Common myeloid progenitor, CD34-positive (primary cell): ENCODE measurements at regions of chr10 and their contacts with region 1.

Region 1: GRCh38 chr10:11113156-11113555 is 95.5 kb downstream of the CELF2 start:
- DNase-seq: peak; percentile 63 to 77 (median 76)
- H3K4me3 ChIP-seq: peak overlapping the region in 2 of 7 experiments; percentile 28 to 35
- H3K27ac ChIP-seq: no peak overlapping the region
- H3K4me1 ChIP-seq: peaks cover 7 to 17% (median 10%) of the 10 kb centered on the region in 4 experiments
- H3K27me3 ChIP-seq: no peaks in the 10 kb centered on the region

Region 2: DNA sequence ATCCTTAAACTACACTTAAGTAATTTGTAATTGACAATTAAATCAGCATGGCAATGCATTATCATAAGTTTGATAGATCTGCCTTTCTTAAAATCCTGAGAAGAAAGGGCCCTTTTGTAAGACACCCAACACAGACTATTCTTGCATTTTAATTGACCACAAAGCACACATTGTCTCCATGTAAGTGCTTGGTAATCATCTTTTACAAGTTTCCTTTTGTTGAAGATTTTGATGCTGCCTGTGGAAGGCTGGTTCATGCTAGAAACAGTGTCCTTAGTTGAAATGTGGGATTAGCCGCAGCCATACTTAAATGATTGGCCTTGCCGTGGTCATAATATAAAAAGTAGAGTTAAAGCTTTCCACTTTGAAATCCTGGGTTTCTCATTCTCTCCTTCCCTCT is 127.8 kb before region 1 on chr10:
- CTCF ChIA-PET with region 1: no interaction called
- POLR2A ChIA-PET with region 1: no interaction called
- DNase-seq: no peak
- H3K4me3 ChIP-seq: no peak overlapping the region
- H3K27ac ChIP-seq: no peak overlapping the region
- H3K4me1 ChIP-seq: no peaks in the 10 kb centered on the region
- H3K27me3 ChIP-seq: no peaks in the 10 kb centered on the region

Region 3: GRCh38 chr10:11097686-11098085 is 15.5 kb before region 1 on chr10:
- CTCF ChIA-PET with region 1: interaction called, 20 read pairs
- POLR2A ChIA-PET with region 1: no interaction called
- DNase-seq: no peak
- H3K4me3 ChIP-seq: no peak overlapping the region
- H3K27ac ChIP-seq: no peak overlapping the region
- H3K4me1 ChIP-seq: no peaks in the 10 kb centered on the region
- H3K27me3 ChIP-seq: no peaks in the 10 kb centered on the region

Region 4: DNA sequence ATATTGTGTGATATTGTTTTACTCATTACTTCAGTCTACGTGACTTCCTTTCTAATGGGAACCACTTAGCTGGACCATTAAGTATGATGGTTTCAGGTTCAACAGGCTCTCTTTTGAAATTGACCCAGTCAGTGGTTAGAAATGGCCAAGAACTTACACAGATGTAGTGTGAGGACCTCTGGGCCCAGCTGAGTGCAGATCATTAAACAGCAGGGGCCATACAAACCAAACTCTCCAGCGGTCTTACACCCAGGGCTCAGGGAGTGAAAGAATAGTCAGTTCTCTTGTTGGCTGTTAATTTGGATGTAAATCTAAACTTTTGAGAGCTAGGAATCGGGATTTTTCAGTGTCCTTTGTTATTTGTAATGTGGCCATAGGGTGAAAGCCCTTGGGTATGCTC is 11.8 kb after region 1 on chr10:
- CTCF ChIA-PET with region 1: interaction called, 26 read pairs
- POLR2A ChIA-PET with region 1: no interaction called
- DNase-seq: no peak
- H3K4me3 ChIP-seq: no peak overlapping the region
- H3K27ac ChIP-seq: no peak overlapping the region
- H3K4me1 ChIP-seq: peaks cover 0 to 6% (median 0%) of the 10 kb centered on the region in 4 experiments
- H3K27me3 ChIP-seq: no peaks in the 10 kb centered on the region

Region 5: DNA sequence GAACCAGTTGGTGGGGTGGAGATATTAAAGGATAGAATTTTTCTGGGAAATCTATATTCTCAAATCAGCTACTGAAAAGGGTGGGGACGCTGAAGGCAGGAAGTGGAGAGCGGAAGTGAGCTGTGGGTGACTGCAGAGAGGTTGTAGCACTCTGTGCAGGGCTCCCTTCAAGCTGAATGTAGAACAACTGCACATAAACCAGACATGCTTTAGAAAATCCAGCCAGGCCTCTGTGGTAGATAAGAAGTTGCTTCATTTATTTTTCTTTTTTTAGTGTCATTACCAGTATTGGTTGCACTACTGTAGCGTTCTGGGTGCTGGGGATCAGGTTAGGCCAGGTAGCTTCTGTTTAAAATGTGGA is 32.3 kb after region 1 on chr10:
- CTCF ChIA-PET with region 1: interaction called, 16 read pairs
- POLR2A ChIA-PET with region 1: interaction called, 3 read pairs
- DNase-seq: peak in 2 of 3 donors; percentile 78 to 87
- H3K4me3 ChIP-seq: peak overlapping the region in 6 of 7 experiments; percentile 9 to 50 (median 24)
- H3K27ac ChIP-seq: peak overlapping the region; percentile 42 to 71
- H3K4me1 ChIP-seq: peaks cover 63 to 100% (median 90%) of the 10 kb centered on the region in 4 experiments
- H3K27me3 ChIP-seq: no peaks in the 10 kb centered on the region

Region 6: GRCh38 chr10:11165591-11166543 is 52.7 kb after region 1 on chr10:
- CTCF ChIA-PET with region 1: interaction called, 42 read pairs
- POLR2A ChIA-PET with region 1: interaction called, 6 read pairs
- DNase-seq: peak; percentile 82 to 93 (median 89)
- H3K4me3 ChIP-seq: peak overlapping the region; percentile 88 to 99 (median 97)
- H3K27ac ChIP-seq: peak overlapping the region; percentile 85 to 95
- H3K4me1 ChIP-seq: peaks cover 66 to 80% (median 73%) of the 10 kb centered on the region in 4 experiments
- H3K27me3 ChIP-seq: no peaks in the 10 kb centered on the region

Region 7: DNA sequence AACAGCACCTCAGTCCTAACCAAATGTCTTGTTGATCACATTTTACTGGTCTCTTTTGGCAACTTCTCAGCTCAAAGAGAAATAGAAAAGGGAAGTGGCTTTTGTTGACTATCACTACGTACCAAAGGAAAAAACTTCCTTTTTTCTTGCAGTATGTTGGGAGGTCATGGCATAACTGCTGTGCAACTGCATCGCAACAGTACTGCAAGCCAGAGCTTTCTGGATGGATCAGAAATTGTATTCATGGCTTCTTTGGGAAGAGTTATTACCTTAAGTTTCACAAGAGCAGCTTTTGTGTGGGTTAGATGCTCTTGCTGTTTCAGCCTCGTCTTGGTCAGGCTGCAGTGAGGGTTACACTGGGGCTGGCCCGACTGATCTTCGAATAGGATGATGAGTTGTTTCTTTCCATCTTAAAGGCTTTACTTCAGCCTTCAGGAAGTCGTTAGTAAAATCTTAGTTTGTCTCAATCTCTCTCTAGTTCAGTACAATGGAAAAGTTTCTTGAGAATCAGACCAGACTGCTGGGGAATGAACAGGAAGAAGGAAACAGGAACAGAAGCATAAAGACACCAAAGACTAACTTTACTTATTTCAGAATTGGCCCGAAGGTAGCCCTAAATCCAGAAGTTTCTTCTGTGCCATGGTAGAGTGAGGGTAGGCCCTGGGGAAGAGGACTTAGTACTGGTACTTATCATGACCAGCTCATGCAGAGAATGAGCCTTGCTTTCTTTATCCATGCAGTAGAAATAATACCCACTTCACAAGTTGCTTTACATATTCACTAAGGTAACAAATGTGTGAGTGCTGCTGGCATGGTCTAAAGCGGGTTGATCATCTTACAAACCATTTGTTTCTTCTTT is 58.1 kb after region 1 on chr10:
- CTCF ChIA-PET with region 1: interaction called, 42 read pairs
- POLR2A ChIA-PET with region 1: interaction called, 3 read pairs
- DNase-seq: peak; percentile 67 to 85 (median 82)
- H3K4me3 ChIP-seq: peak overlapping the region in 6 of 7 experiments; percentile 88 to 99 (median 98)
- H3K27ac ChIP-seq: peak overlapping the region; percentile 85 to 95
- H3K4me1 ChIP-seq: peaks cover 85 to 94% (median 92%) of the 10 kb centered on the region in 4 experiments
- H3K27me3 ChIP-seq: no peaks in the 10 kb centered on the region

Region 8: DNA sequence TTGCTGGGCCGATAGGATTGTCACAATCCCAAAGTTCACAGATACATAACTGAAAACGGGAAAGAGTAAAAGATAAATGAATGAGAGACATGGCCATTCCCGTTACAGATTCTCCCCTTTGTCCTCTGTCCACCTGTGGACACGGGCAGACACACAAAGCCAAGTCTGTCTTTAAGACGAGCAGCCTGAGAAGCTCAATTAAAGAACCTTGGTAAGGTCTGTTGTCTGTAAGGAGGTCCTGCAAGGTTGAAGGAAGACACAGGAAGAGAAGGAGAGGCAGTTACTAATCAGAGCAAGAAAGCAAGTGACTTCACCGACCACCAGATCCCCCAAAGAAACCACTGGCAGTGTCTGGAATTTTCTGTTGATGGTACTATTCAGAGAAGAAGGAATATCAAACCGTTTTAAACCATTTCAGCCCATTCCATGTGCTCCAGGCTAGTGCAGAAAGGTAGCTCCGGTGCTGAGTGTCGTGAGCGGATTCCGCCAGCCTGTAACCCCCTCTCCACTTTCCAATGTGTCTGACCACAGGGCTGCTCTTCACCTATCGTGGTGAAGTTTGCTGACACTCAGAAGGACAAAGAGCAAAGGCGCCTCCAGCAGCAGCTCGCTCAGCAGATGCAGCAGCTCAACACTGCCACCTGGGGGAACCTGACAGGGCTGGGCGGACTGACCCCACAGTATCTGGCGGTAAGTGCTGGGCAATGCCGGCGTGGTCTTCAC is 157.1 kb after region 1 on chr10:
- CTCF ChIA-PET with region 1: interaction called, 12 read pairs
- POLR2A ChIA-PET with region 1: no interaction called
- DNase-seq: peak; percentile 59 to 77 (median 74)
- H3K4me3 ChIP-seq: no peak overlapping the region
- H3K27ac ChIP-seq: no peak overlapping the region
- H3K4me1 ChIP-seq: peaks cover 0 to 9% (median 2%) of the 10 kb centered on the region in 4 experiments
- H3K27me3 ChIP-seq: no peaks in the 10 kb centered on the region